ENCODE measurements at regions of chr9 and their contacts with region 1.

Region 1: DNA sequence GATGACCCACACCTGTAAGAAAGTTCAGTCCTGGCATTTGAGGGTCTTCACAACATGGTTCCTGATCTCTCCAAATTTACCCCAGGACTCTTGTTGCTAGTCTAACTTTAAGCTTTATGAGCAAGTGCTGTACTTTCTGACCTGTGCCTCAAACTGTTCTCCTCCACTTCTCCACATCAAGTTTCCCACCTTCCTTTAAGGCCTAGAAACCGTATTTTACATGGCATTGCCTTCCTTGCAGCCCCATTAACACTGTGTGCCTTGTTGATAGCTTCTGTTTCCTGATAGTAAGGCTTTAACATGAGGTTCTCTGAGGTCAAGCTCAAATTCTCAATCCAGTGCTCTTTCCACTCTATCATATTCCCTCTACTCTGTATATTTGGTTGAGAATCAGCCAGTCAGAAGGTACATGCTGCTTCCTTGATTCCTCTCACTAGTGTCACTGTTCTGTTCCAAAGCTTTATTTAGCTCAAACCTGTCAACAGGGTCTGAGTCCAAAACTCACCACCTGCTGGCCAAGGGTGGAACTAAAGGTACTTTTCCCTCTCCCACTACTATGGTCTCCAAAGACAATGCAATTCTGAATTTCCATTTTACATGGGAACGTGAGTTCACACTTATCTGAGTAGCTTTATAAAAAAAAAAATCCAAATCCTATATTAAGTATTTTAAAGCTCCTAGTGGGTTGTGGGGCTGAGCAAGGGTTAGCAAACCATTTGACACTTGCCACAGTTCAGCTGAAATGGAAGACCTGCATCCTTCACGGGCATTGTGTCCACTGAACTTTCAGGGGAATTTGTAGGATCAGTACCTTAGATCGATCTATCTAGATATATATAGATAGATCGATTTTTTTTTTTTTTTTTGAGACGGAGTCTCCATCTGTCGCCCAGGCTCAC is 21.1 kb downstream of the VCP start:
- DNase-seq: peak; percentile 69
- ATAC-seq: peak; percentile 84
- H3K4me3 Mint-ChIP-seq: no peak overlapping the region
- H3K27ac Mint-ChIP-seq: peak overlapping the region; percentile 26
- H3K4me1 Mint-ChIP-seq: no peaks in the 10 kb centered on the region
- H3K27me3 Mint-ChIP-seq: no peaks in the 10 kb centered on the region

Region 2: DNA sequence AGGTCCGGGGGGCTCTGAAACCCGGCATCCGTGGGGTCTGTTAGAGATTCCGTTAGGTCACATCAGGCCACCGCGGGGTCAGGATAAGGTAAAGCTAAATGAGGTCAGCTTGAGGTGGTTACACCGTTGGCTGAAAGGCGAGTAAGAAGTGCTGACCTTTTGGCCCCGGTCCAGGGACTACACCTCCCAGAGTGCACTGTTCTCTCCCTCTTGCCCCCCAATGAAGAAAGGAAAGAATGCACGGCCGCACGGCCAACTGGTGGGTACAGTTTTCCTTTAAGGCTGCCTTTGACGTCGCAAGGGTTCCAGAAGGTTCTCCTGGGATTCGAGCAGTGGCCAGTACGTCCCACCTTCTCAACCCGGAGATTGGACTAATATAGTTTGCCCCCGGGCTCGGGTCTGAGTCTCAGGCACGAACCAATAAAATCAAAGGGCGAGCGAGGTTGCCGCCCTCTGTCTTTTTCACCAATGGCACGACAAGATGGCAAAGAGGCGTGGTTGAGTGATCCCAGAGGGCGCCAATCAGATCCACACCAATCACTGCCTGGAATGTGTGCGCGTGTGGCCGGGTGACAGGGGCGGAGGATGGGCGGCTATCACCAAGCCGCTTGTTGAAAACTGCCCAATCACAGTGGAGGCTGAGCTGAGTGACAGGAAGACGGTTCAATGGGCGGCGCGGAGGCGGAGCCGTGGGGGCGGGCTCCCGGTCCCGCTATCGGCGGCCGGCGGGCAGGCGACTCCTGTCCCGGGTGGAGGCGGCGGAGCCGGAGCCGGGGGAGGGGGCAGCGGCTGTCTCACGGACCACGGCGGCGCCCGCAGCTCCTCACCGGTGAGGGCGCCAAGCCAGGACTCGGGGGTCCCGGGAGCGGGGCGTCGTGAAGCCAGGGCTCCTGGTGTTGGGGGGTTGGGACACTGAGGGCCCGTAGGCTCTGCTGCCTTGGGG is 62.0 kb before region 1 on chr9 and contains the start of gene DNAJB5:
- CTCF ChIA-PET with region 1: interaction called, 13 read pairs
- DNase-seq: peak; percentile 98
- ATAC-seq: peak; percentile 97
- H3K4me3 Mint-ChIP-seq: peak within 1 kb of the TSS; percentile 90
- H3K27ac Mint-ChIP-seq: peak within 1 kb of the TSS; percentile 94
- H3K4me1 Mint-ChIP-seq: peaks cover 44% of the 10 kb centered on the region
- H3K27me3 Mint-ChIP-seq: no peaks in the 10 kb centered on the region
- total RNA-seq, gene DNAJB5: 5.2 to 5.5 TPM

Region 3: DNA sequence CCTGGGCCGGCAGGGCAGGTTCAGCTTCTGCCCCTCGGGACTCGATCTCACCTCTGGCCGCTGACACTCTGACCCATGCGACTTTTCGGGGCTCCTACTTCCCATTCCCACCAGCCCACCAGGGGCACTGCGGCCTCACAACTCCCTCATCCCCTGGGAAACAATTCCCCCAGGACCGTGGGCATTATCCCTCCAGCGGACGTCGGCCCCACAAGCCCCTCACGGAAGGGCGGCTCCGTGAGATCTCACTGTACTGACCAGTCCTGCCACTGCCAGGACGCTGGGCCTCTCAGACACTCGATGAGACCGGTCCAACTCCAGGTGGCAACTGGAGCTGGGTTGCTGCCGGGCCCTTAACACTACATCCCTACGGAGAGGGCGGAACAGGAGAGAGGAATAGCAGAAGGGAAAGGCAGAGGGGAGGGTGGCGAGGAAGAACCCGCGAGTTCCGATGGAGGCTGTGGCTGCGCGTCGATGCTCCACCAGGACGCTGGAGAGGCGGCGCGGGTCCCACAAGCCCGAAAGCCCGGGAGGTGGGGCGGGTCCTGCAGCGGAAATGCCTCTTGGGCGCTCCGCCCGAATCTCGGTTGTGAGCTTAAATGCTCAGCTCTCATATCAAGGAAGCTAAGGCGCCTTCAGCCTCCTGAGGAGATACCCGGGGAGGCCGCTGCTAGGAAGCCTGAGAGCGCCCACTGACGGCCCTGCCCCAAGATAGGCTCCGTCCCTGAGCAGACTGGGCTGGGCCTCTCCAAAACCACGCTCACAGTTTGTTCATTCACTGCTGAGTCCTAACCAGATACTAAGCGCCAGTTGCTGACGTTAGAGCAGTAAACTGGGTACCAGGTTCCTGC is 15.2 kb before region 1 on chr9:
- CTCF ChIA-PET with region 1: interaction called, 21 read pairs
- DNase-seq: peak; percentile 71
- ATAC-seq: peak; percentile 92
- H3K4me3 Mint-ChIP-seq: peak overlapping the region; percentile 49
- H3K27ac Mint-ChIP-seq: peak overlapping the region; percentile 65
- H3K4me1 Mint-ChIP-seq: peaks cover 8% of the 10 kb centered on the region
- H3K27me3 Mint-ChIP-seq: no peaks in the 10 kb centered on the region

Region 4: DNA sequence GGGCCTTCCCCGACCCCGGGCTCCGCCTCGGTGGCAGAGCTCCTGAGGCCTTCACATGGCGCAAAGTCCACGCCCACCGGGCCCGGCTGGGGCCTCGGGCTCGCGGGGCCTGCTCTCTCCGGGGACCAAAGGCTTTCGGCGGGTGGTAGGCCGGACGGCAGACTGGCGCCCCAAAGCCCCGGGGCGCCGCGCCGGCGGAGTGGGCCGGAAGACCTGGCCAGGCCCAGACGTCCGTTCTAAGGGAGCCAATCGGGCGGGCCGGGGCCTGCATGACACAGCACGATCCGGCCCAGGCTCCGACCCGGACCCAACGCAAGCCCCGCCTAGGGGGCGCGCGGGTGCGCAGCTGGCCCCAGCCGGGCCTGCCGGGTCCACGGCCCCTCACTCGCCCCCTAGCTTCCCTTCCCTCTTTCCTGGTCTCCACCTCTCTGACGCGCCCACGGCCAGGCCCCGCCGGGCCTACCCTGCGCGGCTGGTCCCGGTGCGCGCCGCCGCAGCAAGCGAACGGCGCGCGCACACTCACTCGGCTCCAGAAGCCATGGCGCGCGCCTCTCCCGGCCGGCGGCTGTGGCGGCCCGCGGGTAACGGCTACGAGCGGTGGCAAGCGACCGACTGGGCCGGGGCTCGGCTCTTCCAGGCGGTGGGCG is 20.6 kb after region 1 on chr9:
- CTCF ChIA-PET with region 1: interaction called, 14 read pairs
- DNase-seq: peak; percentile 86
- ATAC-seq: peak; percentile 71
- H3K4me3 Mint-ChIP-seq: peak overlapping the region; percentile 79
- H3K27ac Mint-ChIP-seq: peak overlapping the region; percentile 96
- H3K4me1 Mint-ChIP-seq: peaks cover 67% of the 10 kb centered on the region
- H3K27me3 Mint-ChIP-seq: no peaks in the 10 kb centered on the region

Measured in activated CD8-positive, alpha-beta memory T cell treated with anti-CD3 and anti-CD28 coated beads, Interleukin-2, amount 10 ng/mL, durations not matched to agents 7 days and 5 days (primary cell).